A673 (cell line): ENCODE measurements at regions of chr9 and their contacts with region 1.

Region 1: DNA sequence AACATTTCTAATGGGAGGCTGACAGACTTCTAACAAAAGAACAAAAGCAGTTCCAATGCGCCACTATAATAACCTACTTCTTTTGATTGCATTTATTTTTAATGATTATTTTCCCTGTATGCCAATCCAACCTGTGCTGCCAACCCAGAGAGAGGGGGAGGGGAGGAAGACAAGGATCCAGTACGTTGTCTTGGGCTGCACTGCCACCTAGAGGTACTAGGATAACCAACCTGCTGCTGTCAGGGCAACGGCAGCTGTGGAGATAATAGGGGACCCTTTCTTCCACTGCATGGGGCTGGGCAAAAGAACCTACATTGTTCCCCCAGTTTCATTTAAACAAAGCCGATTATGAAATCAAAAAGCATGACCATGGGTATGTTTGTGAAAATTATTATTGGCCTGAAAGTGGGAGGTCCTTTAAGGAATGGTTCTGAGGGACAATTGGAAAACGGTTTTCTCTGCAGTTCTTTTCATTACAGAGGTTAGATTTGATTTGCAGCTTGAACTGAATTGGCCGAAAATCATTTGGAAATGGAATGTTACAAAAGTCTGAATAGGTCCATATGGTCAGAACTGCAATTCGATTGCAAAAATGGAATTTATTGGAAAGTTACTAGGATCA is 101.3 kb downstream of the RASEF start:
- DNase-seq: peak; percentile 80
- H3K4me3 ChIP-seq: no peak overlapping the region
- H3K27ac ChIP-seq: no peak overlapping the region
- H3K4me1 ChIP-seq: no peaks in the 10 kb centered on the region
- H3K27me3 ChIP-seq: peaks cover 3% of the 10 kb centered on the region
- CTCF ChIP-seq: peak; percentile 81

Region 2: DNA sequence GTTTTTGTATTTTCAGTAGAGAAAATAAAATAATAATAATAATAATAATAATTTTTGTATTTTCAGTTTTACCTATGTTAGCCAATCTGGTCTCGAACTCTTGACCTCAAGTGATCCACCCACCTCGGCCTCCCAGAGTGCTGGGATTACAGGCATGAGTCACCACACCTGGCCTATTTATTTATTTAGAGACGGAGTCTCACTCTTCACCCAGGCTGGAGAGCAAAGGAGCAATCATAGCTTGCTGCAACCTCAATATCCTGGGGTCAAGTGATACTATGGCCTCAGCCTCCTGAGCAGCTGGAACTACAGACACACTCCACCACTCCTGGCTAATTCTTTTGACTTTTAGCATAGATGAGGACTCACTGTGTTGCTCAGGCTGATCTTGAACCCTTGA is 1439.7 kb before region 1 on chr9:
- CTCF ChIA-PET with region 1: no interaction called
- POLR2A ChIA-PET with region 1: no interaction called
- intact Hi-C with region 1: loop called (anchors 5 kb)
- DNase-seq: no peak
- H3K4me3 ChIP-seq: no peak overlapping the region
- H3K27ac ChIP-seq: no peak overlapping the region
- H3K4me1 ChIP-seq: no peaks in the 10 kb centered on the region
- H3K27me3 ChIP-seq: no peaks in the 10 kb centered on the region
- CTCF ChIP-seq: no peak

Region 3: DNA sequence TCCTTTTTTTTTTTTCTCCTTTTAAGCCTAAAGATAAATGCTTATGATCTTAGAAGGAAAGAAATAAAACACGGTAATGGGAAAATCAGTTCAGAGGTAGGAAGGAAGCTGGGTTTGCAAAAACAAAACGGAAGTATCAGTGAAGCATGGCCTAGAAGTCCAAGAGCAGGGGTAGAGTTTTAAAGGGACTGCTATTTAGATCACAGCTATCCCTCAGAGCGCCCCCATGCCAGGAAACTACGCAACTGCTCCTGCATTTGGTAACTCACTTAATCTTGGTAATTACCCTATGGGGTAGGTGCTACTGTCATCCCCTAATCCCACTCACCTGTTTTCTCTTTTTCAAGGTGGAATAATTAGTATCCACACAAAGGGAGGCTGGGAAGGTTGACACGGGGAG is 1288.3 kb before region 1 on chr9:
- CTCF ChIA-PET with region 1: interaction called, 12 read pairs
- POLR2A ChIA-PET with region 1: no interaction called
- intact Hi-C with region 1: no loop called
- DNase-seq: no peak
- H3K4me3 ChIP-seq: no peak overlapping the region
- H3K27ac ChIP-seq: no peak overlapping the region
- H3K4me1 ChIP-seq: no peaks in the 10 kb centered on the region
- H3K27me3 ChIP-seq: no peaks in the 10 kb centered on the region
- CTCF ChIP-seq: no peak

Region 4: GRCh38 chr9:82532504-82533180 is 429.0 kb before region 1 on chr9:
- CTCF ChIA-PET with region 1: no interaction called
- POLR2A ChIA-PET with region 1: no interaction called
- intact Hi-C with region 1: loop called (anchors 2 kb)
- DNase-seq: peak; percentile 7
- H3K4me3 ChIP-seq: no peak overlapping the region
- H3K27ac ChIP-seq: no peak overlapping the region
- H3K4me1 ChIP-seq: no peaks in the 10 kb centered on the region
- H3K27me3 ChIP-seq: no peaks in the 10 kb centered on the region
- CTCF ChIP-seq: peak; percentile 41; the same call in 1 of the 2 replicates

Region 5: DNA sequence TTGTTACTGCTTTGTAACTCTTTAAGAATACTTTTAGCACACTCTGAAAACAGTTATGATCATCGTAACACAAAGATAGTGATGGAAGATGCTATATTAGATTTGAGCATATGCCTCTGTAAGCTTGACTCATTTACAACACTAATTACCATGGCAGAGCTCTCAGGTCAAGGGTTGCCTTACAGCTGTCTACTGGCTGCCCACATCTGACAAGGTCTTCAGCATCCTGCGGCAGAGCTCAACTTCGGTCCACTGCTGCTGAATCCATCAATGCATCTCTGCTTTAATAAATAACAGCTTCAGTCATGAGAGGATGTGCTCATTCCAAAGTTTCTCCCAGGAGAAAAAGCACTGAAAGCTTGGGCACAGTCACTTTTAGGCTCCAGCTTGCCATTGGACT is 348.1 kb before region 1 on chr9:
- CTCF ChIA-PET with region 1: no interaction called
- POLR2A ChIA-PET with region 1: no interaction called
- intact Hi-C with region 1: loop called (anchors 10 kb)
- DNase-seq: no peak
- H3K4me3 ChIP-seq: no peak overlapping the region
- H3K27ac ChIP-seq: no peak overlapping the region
- H3K4me1 ChIP-seq: no peaks in the 10 kb centered on the region
- H3K27me3 ChIP-seq: peaks cover 5% of the 10 kb centered on the region
- CTCF ChIP-seq: no peak

Region 6: DNA sequence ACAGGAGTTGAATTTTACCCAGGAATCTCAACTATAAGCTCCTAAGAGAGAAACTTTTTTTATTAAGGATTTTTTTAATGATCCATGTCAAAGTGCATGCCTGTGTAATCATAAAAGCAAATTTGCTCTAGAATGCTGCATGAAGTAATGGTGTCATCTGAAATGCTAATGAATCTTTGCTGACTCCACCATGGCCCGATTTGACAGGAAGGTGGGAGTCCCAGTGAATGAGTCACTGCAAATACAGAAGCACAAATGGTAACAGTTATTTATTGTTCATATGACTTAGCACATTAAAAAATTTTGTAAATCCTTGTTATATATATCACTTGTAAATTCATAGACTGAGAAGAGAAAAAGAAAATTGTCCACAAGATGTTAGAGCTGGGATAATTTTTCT is 240.0 kb before region 1 on chr9:
- CTCF ChIA-PET with region 1: no interaction called
- POLR2A ChIA-PET with region 1: no interaction called
- intact Hi-C with region 1: no loop called
- DNase-seq: peak; percentile 26
- H3K4me3 ChIP-seq: no peak overlapping the region
- H3K27ac ChIP-seq: no peak overlapping the region
- H3K4me1 ChIP-seq: no peaks in the 10 kb centered on the region
- H3K27me3 ChIP-seq: no peaks in the 10 kb centered on the region
- CTCF ChIP-seq: no peak

Region 7: DNA sequence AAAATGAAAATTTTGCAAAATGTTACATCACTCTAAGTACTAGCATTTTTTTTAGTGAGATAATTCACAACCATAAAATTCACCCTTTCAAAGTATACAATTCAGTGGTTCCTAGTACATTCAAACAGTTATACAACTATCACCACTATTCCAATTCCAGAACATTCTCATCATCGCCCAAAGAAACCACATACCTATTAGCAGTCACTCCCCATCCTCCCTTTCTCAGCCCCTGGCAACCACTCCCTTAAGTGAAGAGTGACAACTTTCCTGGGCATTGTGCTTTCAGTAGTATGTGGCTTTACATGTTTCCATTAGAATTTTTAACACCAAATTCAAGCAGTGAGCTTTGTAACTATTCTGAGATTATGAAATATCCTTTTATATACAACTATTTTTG is 19.9 kb after region 1 on chr9:
- CTCF ChIA-PET with region 1: no interaction called
- POLR2A ChIA-PET with region 1: no interaction called
- intact Hi-C with region 1: no loop called
- DNase-seq: no peak
- H3K4me3 ChIP-seq: no peak overlapping the region
- H3K27ac ChIP-seq: no peak overlapping the region
- H3K4me1 ChIP-seq: no peaks in the 10 kb centered on the region
- H3K27me3 ChIP-seq: no peaks in the 10 kb centered on the region
- CTCF ChIP-seq: no peak